ENCODE measurements at regions of chr16 and their contacts with region 1.

Region 1: DNA sequence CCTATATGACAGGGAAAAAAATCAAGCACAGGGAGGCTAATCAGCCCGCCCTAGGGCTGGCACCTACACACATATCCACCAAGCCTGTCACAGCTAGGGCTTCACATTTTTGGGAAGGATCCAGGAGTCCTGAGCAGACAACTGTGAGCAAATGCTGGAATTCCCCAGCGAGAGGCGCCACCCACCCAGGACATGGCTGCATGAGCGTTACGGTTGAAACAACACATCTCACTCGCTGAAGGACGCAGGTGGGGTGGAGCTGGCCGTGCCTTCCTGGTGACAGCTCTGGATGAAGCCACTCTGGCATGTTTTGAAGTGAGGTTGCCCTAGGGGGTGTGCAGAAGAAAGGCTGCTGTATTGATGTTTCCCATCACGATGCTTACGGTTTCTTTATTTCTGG is 315.1 kb upstream of the EEF2KMT start:
- DNase-seq: peak in 1 of 2 experiments; percentile 70
- H3K4me3 ChIP-seq: no peak overlapping the region
- H3K27ac ChIP-seq: no peak overlapping the region
- H3K4me1 ChIP-seq: peaks cover 0 to 6% (median under 1%) of the 10 kb centered on the region in 4 experiments; a peak in 2 of 7 replicates
- H3K27me3 ChIP-seq: no peaks in the 10 kb centered on the region
- CTCF ChIP-seq: peak; percentile 76 to 82 (median 78)
- EP300 ChIP-seq: no peak
- POLR2A ChIP-seq: no peak
- RAD21 ChIP-seq: peak; percentile 85 to 91

Region 2: DNA sequence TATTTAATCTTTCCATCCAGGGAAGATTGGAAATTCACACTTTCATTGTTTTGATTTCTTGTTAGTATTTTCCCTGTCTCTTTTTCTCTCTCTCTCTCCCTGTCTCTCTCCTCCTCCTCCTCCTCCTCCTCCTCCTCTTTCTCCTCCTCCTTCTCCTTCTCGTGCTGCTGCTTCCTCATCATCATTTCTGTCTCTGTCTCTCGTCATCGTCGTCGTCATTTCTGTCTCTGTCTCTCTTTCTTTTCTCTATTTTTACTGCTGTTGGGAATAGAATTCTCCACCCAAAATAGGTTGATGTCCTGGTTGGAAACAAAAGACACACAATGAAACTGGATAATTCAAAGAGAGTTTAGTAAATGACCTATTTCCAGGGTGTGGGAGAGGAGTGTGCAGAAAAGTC is 11.1 kb before region 1 on chr16:
- CTCF ChIA-PET with region 1: interaction called, 22 read pairs
- POLR2A ChIA-PET with region 1: interaction called, 3 read pairs
- DNase-seq: no peak
- H3K4me3 ChIP-seq: no peak overlapping the region
- H3K27ac ChIP-seq: no peak overlapping the region
- H3K4me1 ChIP-seq: peaks cover 0 to 7% (median 5%) of the 10 kb centered on the region in 4 experiments; a peak in 5 of 7 replicates
- H3K27me3 ChIP-seq: no peaks in the 10 kb centered on the region
- CTCF ChIP-seq: no peak
- EP300 ChIP-seq: no peak
- POLR2A ChIP-seq: no peak
- RAD21 ChIP-seq: no peak

Region 3: DNA sequence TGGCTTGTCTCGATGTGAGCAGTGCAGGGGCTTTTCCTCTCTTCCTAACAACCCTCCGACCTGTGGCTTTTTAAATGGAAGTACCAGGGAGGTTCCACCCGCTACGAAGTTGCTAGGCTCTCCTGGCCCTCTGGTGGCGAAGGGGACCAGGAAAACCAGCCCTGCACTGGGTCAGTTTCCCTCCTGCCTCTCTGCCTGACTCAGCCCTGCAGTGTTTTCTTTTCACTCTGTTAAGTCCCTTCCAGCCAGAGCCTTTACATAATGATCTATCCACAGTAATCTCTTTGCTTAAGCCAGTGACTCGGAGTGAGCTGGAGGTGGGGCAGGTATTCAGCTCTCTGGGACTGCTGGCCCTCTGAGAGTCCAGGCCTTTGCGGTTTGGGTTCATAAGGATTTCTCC is 16.2 kb after region 1 on chr16:
- CTCF ChIA-PET with region 1: interaction called, 38 read pairs
- POLR2A ChIA-PET with region 1: interaction called, 3 read pairs
- DNase-seq: peak in 1 of 2 experiments; percentile 68
- H3K4me3 ChIP-seq: no peak overlapping the region
- H3K27ac ChIP-seq: no peak overlapping the region
- H3K4me1 ChIP-seq: peaks cover 3 to 8% (median 6%) of the 10 kb centered on the region in 4 experiments; a peak in 6 of 7 replicates
- H3K27me3 ChIP-seq: 0 out of 7 replicates have a peak, but pooled peaks cover 0 to 2% (median 0%) of the 10 kb centered on the region in 4 experiments
- CTCF ChIP-seq: peak; percentile 70 to 84 (median 83)
- EP300 ChIP-seq: no peak
- POLR2A ChIP-seq: no peak
- RAD21 ChIP-seq: peak; percentile 60 to 73

Region 4: DNA sequence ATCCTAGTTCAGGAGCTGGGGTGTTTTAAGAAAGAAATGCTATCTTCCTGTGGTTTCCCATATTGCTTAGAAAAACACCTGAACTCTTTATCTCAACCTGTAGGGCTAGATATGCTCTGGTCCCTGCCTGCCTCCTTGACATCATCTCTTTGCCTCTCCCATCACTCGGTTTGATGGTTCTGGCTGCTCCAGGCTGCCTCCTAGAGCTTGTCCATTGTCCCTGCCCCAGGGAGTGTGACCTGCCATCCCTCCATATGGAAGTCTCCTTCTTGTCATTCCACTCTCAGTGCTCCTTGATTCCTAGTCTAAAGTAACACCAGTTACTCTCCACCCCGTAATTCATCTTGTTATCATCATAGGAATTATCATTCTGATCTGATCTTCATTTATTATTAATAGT is 53.8 kb after region 1 on chr16:
- CTCF ChIA-PET with region 1: interaction called, 13 read pairs
- POLR2A ChIA-PET with region 1: no interaction called
- DNase-seq: no peak
- H3K4me3 ChIP-seq: no peak overlapping the region
- H3K27ac ChIP-seq: no peak overlapping the region
- H3K4me1 ChIP-seq: no peaks in the 10 kb centered on the region; a peak in 1 of 7 replicates
- H3K27me3 ChIP-seq: no peaks in the 10 kb centered on the region; a peak in 2 of 7 replicates
- CTCF ChIP-seq: peak; percentile 50 to 74 (median 69); a peak in 3 of 4 replicates
- EP300 ChIP-seq: no peak
- POLR2A ChIP-seq: no peak
- RAD21 ChIP-seq: peak; percentile 52 to 67

Region 5: GRCh38 chr16:5479926-5480325 is 67.2 kb after region 1 on chr16:
- CTCF ChIA-PET with region 1: interaction called, 52 read pairs
- POLR2A ChIA-PET with region 1: no interaction called
- DNase-seq: no peak
- H3K4me3 ChIP-seq: no peak overlapping the region
- H3K27ac ChIP-seq: no peak overlapping the region
- H3K4me1 ChIP-seq: peaks cover 3 to 9% (median 5%) of the 10 kb centered on the region in 4 experiments; a peak in 5 of 7 replicates
- H3K27me3 ChIP-seq: no peaks in the 10 kb centered on the region
- CTCF ChIP-seq: no peak
- EP300 ChIP-seq: no peak
- POLR2A ChIP-seq: no peak
- RAD21 ChIP-seq: no peak

Region 6: DNA sequence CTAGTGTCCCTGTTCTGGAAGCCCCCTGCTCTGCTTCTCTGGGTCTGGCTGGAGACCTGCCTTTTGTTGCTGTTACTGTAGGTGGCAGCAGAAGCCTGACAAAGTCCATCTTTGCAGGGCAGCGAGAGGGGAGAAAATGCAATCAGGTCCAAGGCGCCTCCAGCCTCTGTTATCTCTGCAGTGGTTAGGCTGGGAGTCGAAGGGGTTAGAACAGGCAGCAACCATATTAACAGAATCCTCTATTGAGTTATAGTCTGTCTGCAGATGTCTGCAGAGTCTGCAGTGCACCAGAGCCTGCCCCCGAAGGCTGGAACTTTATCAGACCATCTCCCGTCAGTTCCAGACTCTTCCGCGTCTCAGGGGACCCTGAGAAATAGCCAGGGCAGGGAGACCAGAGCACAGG is 89.7 kb after region 1 on chr16:
- CTCF ChIA-PET with region 1: interaction called, 10 read pairs
- POLR2A ChIA-PET with region 1: no interaction called
- DNase-seq: peak; percentile 39 to 73
- H3K4me3 ChIP-seq: no peak overlapping the region
- H3K27ac ChIP-seq: no peak overlapping the region
- H3K4me1 ChIP-seq: 0 out of 7 replicates have a peak, but pooled peaks cover 0 to 6% (median 0%) of the 10 kb centered on the region in 4 experiments
- H3K27me3 ChIP-seq: no peaks in the 10 kb centered on the region
- CTCF ChIP-seq: peak; percentile 71 to 93 (median 91)
- EP300 ChIP-seq: no peak
- POLR2A ChIP-seq: no peak
- RAD21 ChIP-seq: peak; percentile 96 to 98

Measured in H1 (cell line).